GM13977 (cell line): ENCODE measurements at regions of chr1 and their contacts with region 1.

Region 1: GRCh38 chr1:193019442-193020026 is 39.6 kb downstream of the UCHL5 start:
- DNase-seq: peak; percentile 12
- CTCF ChIP-seq: peak; percentile 54

Region 2: GRCh38 chr1:192477630-192478029 is 541.9 kb before region 1 on chr1:
- in situ Hi-C with region 1: loop called (anchors 10 kb)
- DNase-seq: peak; percentile 36
- CTCF ChIP-seq: peak; percentile 53

Region 3: DNA sequence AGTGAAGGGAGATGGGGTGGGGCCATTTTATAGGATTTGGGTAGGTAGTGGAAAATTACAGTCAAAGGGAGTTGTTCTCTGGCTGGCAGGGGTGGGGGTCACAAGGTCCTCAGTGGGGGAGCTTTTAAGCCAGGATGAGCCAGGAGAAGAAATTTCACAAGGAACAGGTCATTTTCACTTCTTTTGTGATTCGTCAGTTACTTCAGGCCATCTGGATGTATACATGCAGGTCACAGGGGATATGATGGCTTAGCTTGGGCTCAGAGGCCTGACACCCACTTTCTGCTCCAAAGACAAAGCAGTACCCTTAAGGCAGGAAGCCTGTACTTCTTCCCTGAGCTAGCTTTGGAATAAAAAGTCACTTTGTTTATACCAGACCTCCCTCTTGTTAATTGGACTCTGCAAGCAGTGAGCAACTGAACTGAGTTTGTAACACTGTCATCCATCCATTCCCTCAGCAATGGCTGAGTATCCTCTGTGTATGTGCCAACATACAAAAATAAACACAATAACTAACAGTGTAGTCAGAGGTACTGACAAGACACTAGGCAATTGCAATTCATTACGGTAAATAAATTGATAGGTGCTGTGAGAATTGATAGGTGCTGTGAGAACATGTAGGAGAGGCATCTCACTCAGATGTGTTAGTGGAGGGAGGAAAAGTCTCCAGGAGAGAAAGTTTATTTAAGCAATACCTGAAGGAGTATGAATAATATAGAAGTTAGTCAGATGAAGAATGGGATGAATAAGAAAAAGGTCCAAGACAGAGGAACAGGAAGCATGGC is 225.4 kb before region 1 on chr1:
- in situ Hi-C with region 1: loop called (anchors 10 kb)
- DNase-seq: no peak
- CTCF ChIP-seq: no peak

Region 4: DNA sequence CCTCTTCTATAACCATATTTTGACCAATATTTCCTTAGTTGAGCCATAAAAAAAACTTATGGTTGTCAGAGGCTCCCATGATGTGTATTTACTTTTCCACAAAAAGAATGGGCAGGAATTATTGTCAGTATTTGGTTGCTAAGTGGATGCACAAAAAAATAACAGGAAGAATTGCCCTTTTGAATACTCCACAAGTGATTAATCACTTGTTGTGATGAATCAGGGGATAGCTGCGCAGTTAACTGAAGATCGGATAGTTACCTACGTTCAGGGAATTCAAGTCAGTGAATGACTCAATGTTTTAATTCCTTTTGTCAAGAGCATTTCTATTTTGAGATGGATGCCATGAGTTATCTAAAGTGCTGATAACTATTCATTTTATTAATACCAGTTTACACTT is 952.1 kb after region 1 on chr1:
- in situ Hi-C with region 1: no loop called
- DNase-seq: no peak
- CTCF ChIP-seq: no peak